Naive thymus-derived CD4-positive, alpha-beta T cell (primary cell): ENCODE measurements at regions of chr12 and their contacts with region 1.

Region 1: GRCh38 chr12:89352492-89353187 is at the start of gene DUSP6:
- DNase-seq: peak; percentile 60 to 90 (median 83)
- ATAC-seq: peak; percentile 84
- H3K4me3 ChIP-seq: peak within 1 kb of the TSS; percentile 68
- H3K4me3 Mint-ChIP-seq: peak within 1 kb of the TSS; percentile 88 to 98 (median 90)
- H3K27ac ChIP-seq: peak within 1 kb of the TSS; percentile 35
- H3K27ac Mint-ChIP-seq: peak within 1 kb of the TSS; percentile 35 to 97 (median 79)
- H3K4me1 ChIP-seq: peaks cover 23 to 25% of the 10 kb centered on the region in 2 donors
- H3K4me1 Mint-ChIP-seq: peaks cover 19 to 55% (median 48%) of the 10 kb centered on the region in 7 donors
- H3K27me3 ChIP-seq: no peaks in the 10 kb centered on the region
- H3K27me3 Mint-ChIP-seq: peaks cover 0 to 4% (median 0%) of the 10 kb centered on the region in 5 donors
- total RNA-seq, gene DUSP6: 2.7 to 225 (median 33.8) TPM

Region 2: DNA sequence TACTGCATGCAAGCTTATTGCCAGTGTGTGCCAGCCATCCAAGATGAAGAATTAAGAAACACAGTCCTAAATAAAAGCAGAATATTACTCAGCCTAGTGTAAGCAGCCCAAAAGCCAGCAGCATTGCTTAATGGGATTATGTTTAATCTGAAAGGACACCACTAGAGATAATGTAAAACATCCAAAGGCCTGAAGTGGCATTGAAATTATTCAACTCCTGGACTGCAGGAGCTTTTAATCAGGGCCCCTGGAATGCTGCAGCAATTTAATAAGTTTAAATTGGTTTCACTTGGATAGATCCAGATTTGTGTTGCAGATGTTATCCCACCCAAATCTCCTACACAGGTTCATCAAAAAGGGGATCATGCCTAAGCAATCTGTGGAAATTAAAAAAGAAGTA is 1516.5 kb before region 1 on chr12:
- CTCF ChIA-PET with region 1: no interaction called
- POLR2A ChIA-PET with region 1: no interaction called
- intact Hi-C with region 1: no loop called
- DNase-seq: no peak
- ATAC-seq: no peak
- H3K4me3 ChIP-seq: no peak overlapping the region
- H3K4me3 Mint-ChIP-seq: no peak overlapping the region
- H3K27ac ChIP-seq: no peak overlapping the region
- H3K27ac Mint-ChIP-seq: no peak overlapping the region
- H3K4me1 ChIP-seq: no peaks in the 10 kb centered on the region
- H3K4me1 Mint-ChIP-seq: no peaks in the 10 kb centered on the region
- H3K27me3 ChIP-seq: no peaks in the 10 kb centered on the region
- H3K27me3 Mint-ChIP-seq: peaks cover 0 to 4% (median 0%) of the 10 kb centered on the region in 5 donors

Region 3: DNA sequence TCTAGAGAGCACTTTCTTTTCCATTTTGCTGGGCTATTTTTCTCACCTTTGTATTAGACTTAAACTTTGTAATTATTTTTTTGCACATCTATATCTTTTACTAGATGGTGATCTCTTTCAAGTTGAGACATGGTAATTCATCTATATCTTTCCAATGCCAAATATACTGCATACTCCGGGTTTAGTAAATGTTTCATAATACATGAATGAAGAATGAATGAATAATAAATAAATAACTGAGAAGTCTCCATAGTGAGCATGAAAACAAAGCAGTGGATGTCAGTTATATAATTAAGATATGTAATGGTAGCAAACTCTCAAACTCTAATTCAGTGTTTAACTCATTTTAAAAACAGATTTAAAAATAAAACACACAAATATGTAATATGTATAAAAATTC is 429.8 kb before region 1 on chr12:
- CTCF ChIA-PET with region 1: no interaction called
- POLR2A ChIA-PET with region 1: no interaction called
- intact Hi-C with region 1: no loop called
- DNase-seq: no peak
- ATAC-seq: no peak
- H3K4me3 ChIP-seq: no peak overlapping the region
- H3K4me3 Mint-ChIP-seq: no peak overlapping the region
- H3K27ac ChIP-seq: no peak overlapping the region
- H3K27ac Mint-ChIP-seq: no peak overlapping the region
- H3K4me1 ChIP-seq: no peaks in the 10 kb centered on the region
- H3K4me1 Mint-ChIP-seq: no peaks in the 10 kb centered on the region
- H3K27me3 ChIP-seq: no peaks in the 10 kb centered on the region
- H3K27me3 Mint-ChIP-seq: peaks cover 0 to 2% (median 0%) of the 10 kb centered on the region in 5 donors

Region 4: DNA sequence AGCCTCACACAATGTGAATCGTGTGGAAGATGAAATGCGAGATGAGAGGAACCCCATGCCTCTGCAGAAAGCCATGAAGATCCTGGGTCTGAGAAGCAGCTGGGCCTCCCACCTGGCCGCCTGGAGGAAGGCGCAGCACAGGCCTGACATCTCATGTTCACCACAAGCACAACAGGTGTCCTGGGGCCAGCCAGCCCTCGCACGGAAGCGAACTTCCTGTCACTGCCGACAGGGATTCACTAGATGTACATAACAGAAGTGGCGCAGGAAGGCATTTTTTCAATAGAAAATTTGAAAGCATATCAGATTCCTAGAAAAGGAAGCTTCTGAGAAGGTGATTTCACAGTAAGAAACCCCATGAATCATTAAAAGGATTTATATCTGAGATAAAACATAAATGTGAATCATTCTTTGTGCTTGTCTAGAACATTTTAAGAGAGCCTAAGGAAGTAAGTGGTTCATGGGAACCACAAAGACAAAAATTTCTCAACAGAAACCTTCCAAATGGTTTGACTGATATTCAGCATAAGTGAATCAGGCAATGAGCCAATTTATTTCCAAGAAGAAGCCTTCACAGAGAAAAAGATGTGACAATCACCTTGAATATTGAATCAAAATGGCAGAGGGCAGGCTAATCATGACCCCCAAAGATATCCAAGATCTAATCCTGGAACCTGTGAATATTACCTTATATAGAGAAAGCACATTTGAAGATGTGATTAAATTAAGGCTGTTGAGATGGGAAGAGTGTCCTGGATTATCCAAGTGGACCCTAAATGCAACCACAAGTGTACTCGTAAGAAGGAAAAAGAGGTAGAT is 312.3 kb before region 1 on chr12:
- CTCF ChIA-PET with region 1: no interaction called
- POLR2A ChIA-PET with region 1: no interaction called
- intact Hi-C with region 1: loop called in 1 of 2 experiments (anchors 1 kb)
- DNase-seq: peak; percentile 13 to 76 (median 43)
- ATAC-seq: peak; percentile 93
- H3K4me3 ChIP-seq: no peak overlapping the region
- H3K4me3 Mint-ChIP-seq: peak overlapping the region; percentile 29 to 77 (median 54)
- H3K27ac ChIP-seq: no peak overlapping the region
- H3K27ac Mint-ChIP-seq: peak overlapping the region; percentile 1 to 88 (median 68)
- H3K4me1 ChIP-seq: peaks cover 7 to 12% of the 10 kb centered on the region in 2 donors
- H3K4me1 Mint-ChIP-seq: peaks cover 21 to 60% (median 31%) of the 10 kb centered on the region in 7 donors
- H3K27me3 ChIP-seq: no peaks in the 10 kb centered on the region
- H3K27me3 Mint-ChIP-seq: no peaks in the 10 kb centered on the region

Region 5: DNA sequence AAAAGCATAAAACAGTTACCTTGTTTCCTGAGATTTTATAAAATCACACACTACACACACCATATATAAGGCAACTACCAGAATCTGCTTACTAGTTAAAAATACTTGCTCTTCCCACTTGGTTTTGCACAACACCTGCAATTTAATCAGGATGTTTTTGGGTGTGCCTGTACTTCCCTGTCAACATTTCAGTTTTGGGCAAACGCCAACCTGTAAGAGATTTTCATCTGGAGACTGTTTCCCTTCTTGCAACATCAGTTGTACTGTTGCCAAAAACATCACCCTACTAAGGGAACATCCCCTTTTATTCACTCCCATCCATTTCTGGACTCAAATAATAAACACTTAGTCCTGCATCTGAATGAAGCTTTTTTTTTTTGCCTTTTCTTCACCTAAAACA is 172.7 kb before region 1 on chr12:
- CTCF ChIA-PET with region 1: no interaction called
- POLR2A ChIA-PET with region 1: no interaction called
- intact Hi-C with region 1: loop called in 1 of 2 experiments (anchors 2 kb)
- DNase-seq: no peak
- ATAC-seq: peak; percentile 36
- H3K4me3 ChIP-seq: no peak overlapping the region
- H3K4me3 Mint-ChIP-seq: peak overlapping the region in 1 of 10 donors; percentile 47
- H3K27ac ChIP-seq: no peak overlapping the region
- H3K27ac Mint-ChIP-seq: peak overlapping the region in 1 of 9 donors; percentile 77
- H3K4me1 ChIP-seq: peaks cover 0 to 5% of the 10 kb centered on the region in 2 donors
- H3K4me1 Mint-ChIP-seq: peaks cover 6 to 46% (median 14%) of the 10 kb centered on the region in 7 donors
- H3K27me3 ChIP-seq: no peaks in the 10 kb centered on the region
- H3K27me3 Mint-ChIP-seq: no peaks in the 10 kb centered on the region

Region 6: GRCh38 chr12:89280833-89281538 is 71.7 kb before region 1 on chr12:
- CTCF ChIA-PET with region 1: no interaction called
- POLR2A ChIA-PET with region 1: interaction called, 4 read pairs
- intact Hi-C with region 1: loop called (anchors 1 kb)
- DNase-seq: peak in 7 of 9 donors; percentile 7 to 79 (median 52)
- ATAC-seq: peak; percentile 90
- H3K4me3 ChIP-seq: peak overlapping the region; percentile 1
- H3K4me3 Mint-ChIP-seq: peak overlapping the region in 8 of 10 donors; percentile 44 to 80 (median 64)
- H3K27ac ChIP-seq: no peak overlapping the region
- H3K27ac Mint-ChIP-seq: peak overlapping the region in 8 of 9 donors; percentile 38 to 89 (median 66)
- H3K4me1 ChIP-seq: peaks cover 18 to 22% of the 10 kb centered on the region in 2 donors
- H3K4me1 Mint-ChIP-seq: peaks cover 15 to 47% (median 37%) of the 10 kb centered on the region in 7 donors
- H3K27me3 ChIP-seq: no peaks in the 10 kb centered on the region
- H3K27me3 Mint-ChIP-seq: no peaks in the 10 kb centered on the region

Region 7: GRCh38 chr12:89390802-89391673 is 38.4 kb after region 1 on chr12:
- CTCF ChIA-PET with region 1: no interaction called
- POLR2A ChIA-PET with region 1: no interaction called
- intact Hi-C with region 1: no loop called
- DNase-seq: no peak
- ATAC-seq: peak; percentile 38
- H3K4me3 ChIP-seq: no peak overlapping the region
- H3K4me3 Mint-ChIP-seq: no peak overlapping the region
- H3K27ac ChIP-seq: no peak overlapping the region
- H3K27ac Mint-ChIP-seq: peak overlapping the region in 2 of 9 donors; percentile 2 to 3
- H3K4me1 ChIP-seq: peaks cover 0 to 9% of the 10 kb centered on the region in 2 donors
- H3K4me1 Mint-ChIP-seq: peaks cover 14 to 29% (median 18%) of the 10 kb centered on the region in 7 donors
- H3K27me3 ChIP-seq: no peaks in the 10 kb centered on the region
- H3K27me3 Mint-ChIP-seq: no peaks in the 10 kb centered on the region

Region 8: GRCh38 chr12:89427508-89428156 is 75.0 kb after region 1 on chr12:
- CTCF ChIA-PET with region 1: no interaction called
- POLR2A ChIA-PET with region 1: no interaction called
- intact Hi-C with region 1: loop called in 1 of 2 experiments (anchors 2 kb)
- DNase-seq: peak in 1 of 9 donors; percentile 22
- ATAC-seq: peak; percentile 83
- H3K4me3 ChIP-seq: no peak overlapping the region
- H3K4me3 Mint-ChIP-seq: peak overlapping the region in 8 of 10 donors; percentile 0 to 83 (median 17)
- H3K27ac ChIP-seq: no peak overlapping the region
- H3K27ac Mint-ChIP-seq: peak overlapping the region in 5 of 9 donors; percentile 2 to 95 (median 52)
- H3K4me1 ChIP-seq: peaks cover 5 to 29% of the 10 kb centered on the region in 2 donors
- H3K4me1 Mint-ChIP-seq: peaks cover 12 to 48% (median 24%) of the 10 kb centered on the region in 7 donors
- H3K27me3 ChIP-seq: no peaks in the 10 kb centered on the region
- H3K27me3 Mint-ChIP-seq: no peaks in the 10 kb centered on the region

Region 9: DNA sequence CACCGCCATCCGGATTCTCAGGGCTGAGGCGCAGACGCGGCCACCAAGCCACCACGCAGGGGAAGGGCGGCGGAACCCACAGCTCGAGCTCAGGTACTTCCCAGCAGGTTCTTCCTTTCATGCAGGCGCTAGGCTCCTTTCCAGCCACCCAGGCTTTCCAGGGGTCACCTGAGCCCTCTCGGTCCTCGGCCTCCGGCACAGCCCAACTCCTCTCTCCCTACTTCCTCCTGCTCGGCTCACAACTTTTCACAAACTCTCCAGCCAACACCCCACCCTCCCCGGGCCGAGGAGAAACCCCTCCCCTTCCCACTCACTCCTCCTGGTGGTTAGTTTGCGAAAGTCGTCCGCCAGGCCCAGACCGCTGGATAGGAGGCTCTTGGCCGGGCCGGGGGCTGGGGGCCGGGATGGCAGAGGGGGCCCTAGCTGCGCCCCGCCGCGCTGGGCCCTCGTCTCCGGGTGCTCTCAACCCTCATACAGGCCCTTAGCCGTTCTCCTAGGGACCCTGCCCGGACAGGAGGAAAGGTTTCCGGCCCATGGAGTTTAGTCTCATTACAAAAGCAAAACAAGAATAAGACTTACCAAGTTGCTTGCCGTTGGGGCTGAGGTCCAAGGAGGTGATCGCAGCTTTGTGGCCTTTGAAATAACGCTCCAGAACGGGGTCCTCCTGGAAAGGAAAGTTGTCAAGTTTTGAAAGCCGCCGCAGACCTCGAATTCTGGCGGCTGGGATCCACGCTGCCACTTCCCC is 172.1 kb after region 1 on chr12 and contains the start of gene GALNT4:
- CTCF ChIA-PET with region 1: interaction called, 3 read pairs
- POLR2A ChIA-PET with region 1: interaction called, 5 read pairs
- intact Hi-C with region 1: loop called (anchors 1 kb)
- DNase-seq: peak; percentile 61 to 78 (median 74)
- ATAC-seq: peak; percentile 87
- H3K4me3 ChIP-seq: peak within 1 kb of the TSS; percentile 90
- H3K4me3 Mint-ChIP-seq: peak within 1 kb of the TSS; percentile 87 to 98 (median 96)
- H3K27ac ChIP-seq: peak within 1 kb of the TSS; percentile 77
- H3K27ac Mint-ChIP-seq: peak within 1 kb of the TSS; percentile 67 to 96 (median 89)
- H3K4me1 ChIP-seq: peaks cover 30 to 35% of the 10 kb centered on the region in 2 donors
- H3K4me1 Mint-ChIP-seq: peaks cover 30 to 66% (median 55%) of the 10 kb centered on the region in 7 donors
- H3K27me3 ChIP-seq: no peaks in the 10 kb centered on the region
- H3K27me3 Mint-ChIP-seq: no peaks in the 10 kb centered on the region
- total RNA-seq, gene GALNT4: 6.0 to 14.5 (median 9.9) TPM